Posterior vena cava (tissue), 2 donors: ENCODE measurements at regions of chr5 and their contacts with region 1.

Region 1: GRCh38 chr5:144510845-144511579 is 340.3 kb downstream of the KCTD16 start:
- DNase-seq: no peak

Region 2: DNA sequence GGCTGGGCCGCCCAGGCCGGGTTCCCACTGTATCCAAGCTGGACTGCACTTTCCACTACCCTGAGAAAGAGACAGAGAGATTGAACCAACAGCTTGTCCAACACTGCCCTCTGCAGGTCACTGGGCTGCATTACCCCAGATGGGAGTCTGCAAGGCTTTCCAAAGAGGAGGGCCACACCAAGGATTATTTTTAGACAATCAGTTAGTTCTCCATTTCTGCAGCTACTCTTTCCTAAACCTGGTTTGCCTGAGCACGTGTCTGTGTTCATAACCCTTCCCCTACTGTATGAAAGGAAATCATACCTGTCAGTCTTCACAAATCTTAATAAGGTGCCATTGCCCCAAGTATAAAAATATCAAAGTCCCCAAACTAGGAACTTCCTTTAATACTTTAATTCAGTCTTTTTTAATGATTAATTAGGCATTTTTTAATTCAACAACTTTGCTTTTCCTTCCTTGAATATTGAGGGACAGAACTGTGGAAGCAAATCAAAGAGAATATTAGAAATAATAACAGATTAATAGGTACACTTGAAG is 1811.8 kb before region 1 on chr5:
- intact Hi-C with region 1: no loop called
- DNase-seq: peak; percentile 95

Region 3: GRCh38 chr5:143153332-143154119 is 1357.5 kb before region 1 on chr5:
- intact Hi-C with region 1: loop called in 1 of 2 experiments (anchors 10 kb)
- DNase-seq: peak; percentile 91